ENCODE measurements at regions of chr6 and their contacts with region 1.

Region 1: DNA sequence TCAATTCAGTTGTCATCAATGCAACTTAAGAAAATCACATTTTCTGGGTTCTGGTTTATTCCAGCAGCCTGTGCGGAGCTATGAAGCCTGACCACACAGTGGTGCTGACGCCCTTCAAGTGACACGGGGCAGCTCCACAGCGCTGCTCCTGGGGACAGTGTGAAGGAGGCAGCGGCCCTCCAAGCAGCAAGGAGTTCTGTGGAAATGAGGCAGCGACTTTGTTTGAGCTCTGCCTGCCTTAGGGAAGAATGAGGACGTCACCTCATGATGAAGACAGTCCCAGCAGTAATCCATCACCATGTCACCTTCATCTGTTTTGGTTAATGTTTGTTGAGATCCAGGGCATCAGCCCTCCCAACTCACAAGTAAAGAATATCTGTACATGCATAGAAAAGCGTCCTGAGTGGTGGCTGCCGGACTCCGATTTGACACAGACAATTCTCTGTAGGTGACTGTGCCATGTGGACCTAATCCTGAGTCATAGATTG is 168.5 kb upstream of the UST start:
- DNase-seq: peak; percentile 75
- CTCF ChIP-seq: peak; percentile 99

Region 2: DNA sequence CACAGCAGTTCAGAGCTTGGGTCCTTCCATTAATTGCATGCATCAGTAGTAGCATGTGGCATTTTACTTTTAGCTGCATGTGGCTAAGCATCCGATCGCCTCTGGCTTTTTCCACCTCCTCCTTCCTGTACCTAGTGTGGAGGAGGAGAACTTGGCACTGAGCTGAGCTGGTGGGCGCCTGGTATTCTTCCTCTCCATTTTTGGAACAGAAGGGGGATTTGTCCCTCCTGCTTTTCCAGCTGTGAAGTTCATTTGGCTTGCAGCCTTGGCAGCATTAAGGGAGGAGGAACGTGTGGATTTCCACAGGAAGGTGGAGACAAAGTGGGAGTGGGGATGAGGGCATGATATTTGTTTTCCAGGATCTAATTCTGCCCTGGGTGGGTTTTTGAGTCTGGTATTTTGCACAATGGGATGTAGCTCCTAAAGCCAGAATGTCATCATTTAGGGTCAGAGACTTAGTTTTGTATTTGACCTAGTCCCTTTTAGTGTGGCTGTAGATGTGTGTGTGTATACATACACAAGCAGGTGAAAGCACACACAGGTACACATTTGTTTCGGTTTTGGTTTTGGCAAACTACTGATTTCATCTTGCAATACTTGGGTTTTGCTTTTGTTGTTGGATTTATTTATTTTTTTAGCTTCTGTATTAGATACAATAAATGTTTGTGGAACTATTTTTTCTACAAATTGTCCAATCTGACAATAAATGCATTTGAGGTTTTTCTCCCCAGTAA is 145.7 kb before region 1 on chr6:
- CTCF ChIA-PET with region 1: no interaction called
- POLR2A ChIA-PET with region 1: no interaction called
- DNase-seq: no peak
- CTCF ChIP-seq: no peak

Region 3: DNA sequence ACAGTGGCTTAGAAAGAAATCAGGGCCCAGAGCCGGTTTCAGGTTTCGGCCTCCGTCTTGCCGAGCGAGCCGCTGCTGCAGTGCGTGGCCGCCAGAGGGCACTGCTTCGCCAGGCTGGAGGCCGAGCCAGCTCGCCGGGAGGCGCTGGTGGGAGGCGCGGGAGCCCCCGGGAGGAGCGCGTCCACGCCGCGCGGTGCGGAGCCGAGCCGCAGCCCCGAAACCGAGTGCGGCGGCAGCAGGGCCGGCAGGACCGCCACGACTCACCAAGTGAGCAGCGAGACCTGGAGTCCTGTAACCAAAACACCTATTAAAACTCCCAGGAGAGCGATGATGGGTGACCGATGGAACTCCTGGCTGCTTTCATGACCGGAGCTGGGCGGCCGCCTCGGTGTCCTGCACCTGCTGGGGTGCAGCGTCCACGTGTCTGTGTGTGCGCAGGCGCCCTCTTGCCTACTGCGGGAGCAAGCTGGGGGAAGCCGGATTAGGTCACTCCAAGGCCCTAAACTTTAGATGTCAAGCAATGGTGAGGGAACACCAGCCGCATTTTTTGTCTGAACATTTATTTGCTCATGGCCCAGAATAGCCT is 18.3 kb before region 1 on chr6:
- CTCF ChIA-PET with region 1: interaction called, 45 read pairs
- POLR2A ChIA-PET with region 1: no interaction called
- DNase-seq: peak; percentile 85
- CTCF ChIP-seq: peak; percentile 98

Region 4: DNA sequence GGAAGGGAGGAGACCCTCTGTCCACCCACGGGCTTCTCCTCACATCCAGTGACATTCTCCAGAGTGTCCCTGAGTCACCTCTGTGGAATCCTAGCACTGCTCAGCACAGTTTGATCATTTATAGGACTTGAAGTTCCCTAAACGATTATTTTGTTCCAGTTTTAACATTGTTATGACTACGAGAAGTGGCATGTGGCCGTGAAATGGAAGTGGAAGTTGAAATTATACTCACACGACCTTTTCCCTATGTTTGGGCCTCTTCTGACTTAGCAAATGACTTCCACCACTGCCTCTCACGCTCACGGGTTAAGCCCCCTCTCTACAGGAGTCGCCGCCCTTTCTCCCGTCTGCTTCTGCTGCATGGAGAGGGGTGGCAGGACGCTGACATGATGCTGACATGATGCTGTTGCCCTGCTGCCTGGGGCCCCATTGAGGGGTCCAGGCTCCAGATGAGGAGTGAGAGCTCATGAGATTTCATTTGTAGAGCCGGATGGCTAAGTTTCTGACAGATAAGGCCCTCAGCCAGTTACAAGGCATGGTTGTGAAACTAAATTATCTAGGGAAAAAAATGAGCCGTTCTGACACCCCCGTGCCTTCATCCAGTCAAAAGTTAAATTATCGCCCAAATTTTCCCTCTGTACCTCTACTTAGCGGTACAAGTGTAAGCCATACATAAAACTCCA is 15.0 kb after region 1 on chr6:
- CTCF ChIA-PET with region 1: interaction called, 26 read pairs
- POLR2A ChIA-PET with region 1: no interaction called
- DNase-seq: no peak
- CTCF ChIP-seq: no peak

Region 5: DNA sequence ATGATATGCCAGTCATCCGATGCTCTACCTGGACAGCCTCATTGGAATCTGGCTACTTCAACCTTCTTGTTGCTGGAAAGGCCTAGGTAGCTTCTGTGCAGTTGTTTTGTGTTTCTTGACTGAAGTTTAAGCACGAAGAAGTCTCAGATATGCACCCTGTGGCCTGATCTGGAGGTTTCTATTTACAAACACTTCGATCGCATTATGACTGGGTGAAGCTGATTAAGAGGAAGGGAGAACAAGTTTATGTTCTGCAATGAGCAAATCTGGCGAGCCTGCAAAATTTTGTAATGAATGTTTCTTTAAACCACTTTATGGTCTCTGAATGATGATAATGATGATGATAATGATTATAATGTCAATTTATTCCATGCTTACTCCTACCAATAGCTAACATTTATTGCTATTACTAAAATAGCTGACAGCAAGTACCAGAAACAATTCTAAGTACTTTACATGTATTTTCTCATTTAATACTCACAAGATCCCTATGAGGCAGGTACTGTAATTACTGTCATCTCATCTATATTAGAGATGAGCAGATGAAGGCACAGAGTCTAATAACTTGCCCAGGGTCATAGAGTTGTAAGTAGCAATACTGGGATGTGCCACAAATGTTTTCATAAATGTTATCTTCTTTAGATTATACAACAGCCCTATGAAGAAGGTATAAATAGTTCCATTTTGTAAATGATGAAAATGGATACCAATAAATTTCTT is 42.5 kb after region 1 on chr6:
- CTCF ChIA-PET with region 1: interaction called, 10 read pairs
- POLR2A ChIA-PET with region 1: no interaction called
- DNase-seq: peak; percentile 22
- CTCF ChIP-seq: no peak

Region 6: DNA sequence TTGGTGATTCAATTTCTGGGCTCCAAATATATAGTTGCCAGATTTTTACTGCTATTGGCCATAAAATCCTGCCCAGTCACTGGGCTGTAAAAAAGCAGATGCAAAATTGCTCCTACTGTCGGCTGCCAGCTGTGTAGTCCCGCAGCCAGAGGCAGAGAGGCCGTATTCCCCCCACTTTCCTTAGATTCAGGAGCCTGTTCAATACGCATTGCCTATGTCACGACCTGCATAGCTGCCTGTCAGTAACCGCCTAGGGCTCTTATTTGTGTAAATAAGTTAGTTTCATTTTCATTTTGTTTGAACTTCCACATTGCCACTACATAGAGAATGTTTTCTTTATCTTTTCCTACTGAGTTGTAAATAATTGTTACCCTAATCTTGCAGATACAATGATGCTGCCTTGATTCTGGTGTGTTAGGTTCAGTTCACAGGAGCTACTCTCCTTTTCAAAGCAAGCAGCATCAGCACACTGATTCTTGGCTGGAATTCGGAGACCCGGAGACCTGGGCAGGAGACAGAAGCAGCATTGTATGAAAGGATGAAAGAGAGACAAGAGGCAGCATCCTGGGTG is 122.5 kb after region 1 on chr6:
- CTCF ChIA-PET with region 1: interaction called, 23 read pairs
- POLR2A ChIA-PET with region 1: no interaction called
- DNase-seq: peak; percentile 52
- CTCF ChIP-seq: no peak

Region 7: GRCh38 chr6:148760568-148761526 is 182.6 kb after region 1 on chr6:
- CTCF ChIA-PET with region 1: interaction called, 44 read pairs
- POLR2A ChIA-PET with region 1: no interaction called
- DNase-seq: peak; percentile 49
- CTCF ChIP-seq: no peak

Region 8: GRCh38 chr6:148947621-148948444 is 369.5 kb after region 1 on chr6:
- CTCF ChIA-PET with region 1: interaction called, 33 read pairs
- POLR2A ChIA-PET with region 1: no interaction called
- DNase-seq: peak; percentile 71
- CTCF ChIP-seq: peak; percentile 86

Measured in GM10248 (cell line).